H1 (cell line): ENCODE measurements at regions of chr10 and their contacts with region 1.

Region 1: GRCh38 chr10:59646150-59646549 is 63.5 kb downstream of the SLC16A9 start:
- DNase-seq: no peak
- H3K4me3 ChIP-seq: no peak overlapping the region
- H3K27ac ChIP-seq: no peak overlapping the region
- H3K4me1 ChIP-seq: no peaks in the 10 kb centered on the region
- H3K27me3 ChIP-seq: no peaks in the 10 kb centered on the region
- CTCF ChIP-seq: no peak
- EP300 ChIP-seq: no peak
- POLR2A ChIP-seq: no peak
- RAD21 ChIP-seq: no peak

Region 2: DNA sequence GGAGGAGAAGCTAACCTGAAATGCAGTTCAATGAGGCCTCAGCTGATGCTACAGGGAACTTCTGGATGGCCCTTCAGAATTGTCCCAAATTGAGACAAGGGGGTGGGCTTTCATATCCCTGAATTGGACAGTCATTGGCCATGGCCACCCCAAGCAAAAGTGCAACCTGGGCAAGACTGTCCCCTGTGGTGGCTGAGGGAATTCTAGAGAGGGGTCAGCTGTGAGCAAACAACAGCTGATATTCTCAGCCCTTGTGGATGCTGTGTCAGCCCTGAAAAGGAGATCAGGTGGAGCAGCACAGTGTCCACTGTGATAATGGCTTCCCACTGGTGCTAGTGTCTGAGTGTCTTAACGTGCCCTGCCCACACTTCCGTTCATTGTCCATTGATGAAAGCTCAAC is 13.1 kb before region 1 on chr10:
- CTCF ChIA-PET with region 1: interaction called, 11 read pairs
- POLR2A ChIA-PET with region 1: interaction called, 3 read pairs
- DNase-seq: no peak
- H3K4me3 ChIP-seq: no peak overlapping the region
- H3K27ac ChIP-seq: no peak overlapping the region
- H3K4me1 ChIP-seq: peaks cover 0 to 2% (median 0%) of the 10 kb centered on the region in 4 experiments; a peak in 1 of 7 replicates
- H3K27me3 ChIP-seq: no peaks in the 10 kb centered on the region
- CTCF ChIP-seq: peak; percentile 21 to 46 (median 38); a peak in 3 of 4 replicates
- EP300 ChIP-seq: no peak
- POLR2A ChIP-seq: no peak
- RAD21 ChIP-seq: peak; percentile 24 to 40; a peak in 3 of 4 replicates